ENCODE measurements at regions of chr1 and their contacts with region 1.

Region 1: DNA sequence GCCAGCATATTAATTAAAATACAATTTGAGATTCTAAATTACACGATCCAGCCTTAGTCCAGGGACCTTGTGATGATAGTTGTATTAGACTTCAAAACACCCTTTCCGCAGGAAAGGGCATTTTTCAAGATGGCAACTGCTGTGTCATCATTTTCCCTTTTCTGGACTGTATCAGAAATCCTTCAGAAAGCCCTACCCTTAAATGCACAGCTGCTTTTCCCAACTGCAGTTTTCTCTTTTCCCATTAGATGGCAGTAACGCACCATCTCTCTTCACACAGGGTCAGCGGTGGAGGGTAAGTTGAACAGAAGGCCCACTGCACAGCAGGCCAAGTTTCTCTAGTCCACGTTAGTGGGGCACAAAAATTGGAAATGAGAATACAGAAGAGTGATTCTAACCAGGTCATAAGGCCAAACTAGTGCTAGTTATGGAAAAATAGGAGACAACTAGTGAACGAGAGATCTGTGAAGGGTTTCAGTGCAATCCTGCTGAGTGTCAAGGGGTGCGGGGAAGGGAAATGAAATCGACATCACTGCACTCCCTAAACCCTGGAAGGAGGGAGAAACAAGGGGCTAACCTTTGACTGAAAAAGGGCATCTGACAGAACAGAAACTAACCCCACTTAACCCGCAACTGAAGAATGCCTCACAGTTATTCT is 22.1 kb upstream of the TDRD10 start:
- DNase-seq: peak; percentile 69 to 77 (median 77)
- H3K4me3 ChIP-seq: no peak overlapping the region
- H3K4me3 Mint-ChIP-seq: no peak overlapping the region
- H3K27ac ChIP-seq: no peak overlapping the region
- H3K27ac Mint-ChIP-seq: no peak overlapping the region
- H3K4me1 ChIP-seq: peaks cover 18 to 40% of the 10 kb centered on the region in 2 donors
- H3K4me1 Mint-ChIP-seq: peaks cover 33% of the 10 kb centered on the region
- H3K27me3 ChIP-seq: no peaks in the 10 kb centered on the region
- H3K27me3 Mint-ChIP-seq: peaks cover 0 to 2% (median 0%) of the 10 kb centered on the region in 3 donors
- CTCF ChIP-seq: peak; percentile 90

Region 2: GRCh38 chr1:154335025-154335714 is 144.7 kb before region 1 on chr1:
- intact Hi-C with region 1: loop called in 1 of 2 experiments (anchors 10 kb)
- DNase-seq: peak; percentile 81 to 85 (median 85)
- H3K4me3 ChIP-seq: peak overlapping the region in 1 of 3 experiments; percentile 30
- H3K4me3 Mint-ChIP-seq: peak overlapping the region; percentile 66 to 85
- H3K27ac ChIP-seq: no peak overlapping the region
- H3K27ac Mint-ChIP-seq: peak overlapping the region in 1 of 7 donors; percentile 64
- H3K4me1 ChIP-seq: peaks cover 6 to 7% of the 10 kb centered on the region in 2 donors
- H3K4me1 Mint-ChIP-seq: peaks cover 26% of the 10 kb centered on the region
- H3K27me3 ChIP-seq: no peaks in the 10 kb centered on the region
- H3K27me3 Mint-ChIP-seq: peaks cover 0 to 4% (median 2%) of the 10 kb centered on the region in 3 donors
- CTCF ChIP-seq: peak; percentile 95

Region 3: GRCh38 chr1:154404984-154405761 is 74.7 kb before region 1 on chr1 and contains the start of gene IL6R:
- intact Hi-C with region 1: loop called in 1 of 2 experiments (anchors 5 kb)
- DNase-seq: peak; percentile 98 to 99 (median 99)
- H3K4me3 ChIP-seq: peak within 1 kb of the TSS; percentile 90 to 95 (median 94)
- H3K4me3 Mint-ChIP-seq: peak within 1 kb of the TSS; percentile 98
- H3K27ac ChIP-seq: peak within 1 kb of the TSS; percentile 97 to 100
- H3K27ac Mint-ChIP-seq: peak within 1 kb of the TSS; percentile 99 to 100 (median 99)
- H3K4me1 ChIP-seq: peaks cover 82 to 89% of the 10 kb centered on the region in 2 donors
- H3K4me1 Mint-ChIP-seq: peaks cover 80% of the 10 kb centered on the region
- H3K27me3 ChIP-seq: no peaks in the 10 kb centered on the region
- H3K27me3 Mint-ChIP-seq: peaks cover 0 to 2% (median 0%) of the 10 kb centered on the region in 3 donors
- CTCF ChIP-seq: no peak
- polyA plus RNA-seq, gene IL6R: 56.4 to 81.7 (median 62.1) TPM

Region 4: DNA sequence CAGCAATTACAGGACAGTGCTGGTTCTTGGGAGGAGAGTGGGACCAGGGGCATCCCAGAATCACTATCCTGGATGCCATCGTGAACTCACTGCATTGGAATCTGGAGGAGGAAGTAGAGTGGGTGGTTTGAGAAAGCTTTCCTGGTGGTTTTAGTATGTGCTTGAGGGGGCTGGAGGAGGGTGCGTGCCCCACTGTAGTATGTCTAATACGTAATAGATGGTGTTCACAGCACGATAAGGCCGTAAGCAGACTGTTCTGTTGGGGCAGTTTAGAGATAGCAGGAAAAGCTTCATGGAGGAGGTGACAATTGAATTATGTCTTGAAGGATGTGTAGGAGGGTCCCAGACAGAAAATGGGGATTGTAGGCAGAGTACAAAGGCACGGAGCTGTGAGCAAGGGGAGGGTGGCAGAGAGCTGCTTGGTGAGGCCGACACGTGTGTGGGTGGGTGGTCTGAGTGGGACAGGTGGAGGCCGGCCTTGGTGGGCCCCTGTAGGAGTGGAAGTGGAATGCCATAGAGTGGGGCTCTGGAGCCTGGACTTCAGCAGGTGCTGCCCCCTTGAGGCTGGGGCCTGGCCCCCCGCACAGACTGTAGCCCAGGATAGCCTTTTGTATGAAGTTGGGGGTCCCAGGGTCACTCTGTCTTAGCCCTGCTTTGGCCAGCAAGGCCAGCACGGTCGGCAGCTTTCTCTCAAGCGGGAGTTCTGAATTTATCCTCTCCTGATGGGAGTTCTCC is 37.7 kb before region 1 on chr1:
- intact Hi-C with region 1: loop called in 1 of 2 experiments (anchors 5 kb)
- DNase-seq: no peak
- H3K4me3 ChIP-seq: no peak overlapping the region
- H3K4me3 Mint-ChIP-seq: no peak overlapping the region
- H3K27ac ChIP-seq: peak overlapping the region; percentile 11 to 90
- H3K27ac Mint-ChIP-seq: peak overlapping the region; percentile 3 to 99 (median 68)
- H3K4me1 ChIP-seq: peaks cover 29 to 41% of the 10 kb centered on the region in 2 donors
- H3K4me1 Mint-ChIP-seq: peaks cover 42% of the 10 kb centered on the region
- H3K27me3 ChIP-seq: no peaks in the 10 kb centered on the region
- H3K27me3 Mint-ChIP-seq: peaks cover 0 to 4% (median 0%) of the 10 kb centered on the region in 3 donors
- CTCF ChIP-seq: peak; percentile 21

Region 5: GRCh38 chr1:154546264-154547063 is 66.6 kb after region 1 on chr1:
- intact Hi-C with region 1: loop called (anchors 1 to 2 kb)
- DNase-seq: peak; percentile 32 to 63 (median 52)
- H3K4me3 ChIP-seq: no peak overlapping the region
- H3K4me3 Mint-ChIP-seq: no peak overlapping the region
- H3K27ac ChIP-seq: no peak overlapping the region
- H3K27ac Mint-ChIP-seq: no peak overlapping the region
- H3K4me1 ChIP-seq: peaks cover 3 to 11% of the 10 kb centered on the region in 2 donors
- H3K4me1 Mint-ChIP-seq: peaks cover 19% of the 10 kb centered on the region
- H3K27me3 ChIP-seq: no peaks in the 10 kb centered on the region
- H3K27me3 Mint-ChIP-seq: peaks cover 0 to 6% (median 6%) of the 10 kb centered on the region in 3 donors
- CTCF ChIP-seq: peak; percentile 86

Region 6: GRCh38 chr1:154878371-154879022 is 398.6 kb after region 1 on chr1:
- intact Hi-C with region 1: loop called (anchors 5 to 10 kb)
- DNase-seq: peak; percentile 50 to 63 (median 55)
- H3K4me3 ChIP-seq: no peak overlapping the region
- H3K4me3 Mint-ChIP-seq: no peak overlapping the region
- H3K27ac ChIP-seq: no peak overlapping the region
- H3K27ac Mint-ChIP-seq: no peak overlapping the region
- H3K4me1 ChIP-seq: no peaks in the 10 kb centered on the region
- H3K4me1 Mint-ChIP-seq: no peaks in the 10 kb centered on the region
- H3K27me3 ChIP-seq: no peaks in the 10 kb centered on the region
- H3K27me3 Mint-ChIP-seq: peaks cover 2 to 11% (median 3%) of the 10 kb centered on the region in 3 donors
- CTCF ChIP-seq: peak; percentile 76

Region 7: DNA sequence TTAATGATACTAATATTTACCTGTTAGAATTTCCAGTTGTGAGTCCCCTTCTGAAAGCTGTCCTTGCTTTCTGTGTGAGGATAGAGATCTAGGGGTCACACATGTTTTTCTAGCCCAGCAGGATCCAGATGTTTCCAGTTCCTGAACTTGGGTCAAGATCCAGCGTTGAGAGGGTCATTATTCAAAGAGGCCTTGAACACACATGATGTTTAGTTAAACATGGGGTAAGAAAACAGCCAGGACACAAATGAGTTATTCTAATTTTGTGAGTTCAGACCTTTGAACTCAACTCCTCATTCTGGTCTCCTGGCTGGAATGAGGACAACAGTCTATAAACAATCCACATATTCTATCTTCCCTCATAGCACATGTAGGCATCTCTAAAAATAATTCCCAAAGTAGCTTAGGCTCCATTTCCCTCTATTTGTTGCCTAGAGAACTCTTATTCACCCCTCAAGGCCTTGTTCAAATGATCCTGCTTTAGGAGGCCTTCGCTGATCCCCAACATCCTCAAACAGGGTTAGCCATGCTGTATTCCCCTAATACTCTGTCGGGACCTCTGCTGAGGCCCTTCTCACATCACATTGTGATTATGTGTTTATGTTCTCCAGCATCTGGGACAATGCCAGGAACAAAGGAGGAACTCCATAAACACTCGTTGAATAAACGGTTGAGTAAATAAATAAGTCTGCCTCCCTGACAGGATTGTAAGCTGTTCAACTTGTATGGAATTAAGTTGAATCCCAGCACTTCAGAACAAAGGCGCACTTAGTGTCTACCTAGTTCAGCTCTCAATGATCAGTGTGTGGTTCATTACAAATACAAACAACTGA is 405.2 kb after region 1 on chr1:
- intact Hi-C with region 1: loop called in 1 of 2 experiments (anchors 10 kb)
- DNase-seq: no peak
- H3K4me3 ChIP-seq: no peak overlapping the region
- H3K4me3 Mint-ChIP-seq: no peak overlapping the region
- H3K27ac ChIP-seq: no peak overlapping the region
- H3K27ac Mint-ChIP-seq: no peak overlapping the region
- H3K4me1 ChIP-seq: no peaks in the 10 kb centered on the region
- H3K4me1 Mint-ChIP-seq: no peaks in the 10 kb centered on the region
- H3K27me3 ChIP-seq: peaks cover 0 to 2% of the 10 kb centered on the region in 2 donors
- H3K27me3 Mint-ChIP-seq: peaks cover 3 to 10% (median 4%) of the 10 kb centered on the region in 3 donors
- CTCF ChIP-seq: no peak

Measured in CD14-positive monocyte (primary cell).